Activated naive CD4-positive, alpha-beta T cell treated with anti-CD3 and anti-CD28 coated beads for 36 hours (primary cell): ENCODE measurements at regions of chr2 and their contacts with region 1.

Region 1: DNA sequence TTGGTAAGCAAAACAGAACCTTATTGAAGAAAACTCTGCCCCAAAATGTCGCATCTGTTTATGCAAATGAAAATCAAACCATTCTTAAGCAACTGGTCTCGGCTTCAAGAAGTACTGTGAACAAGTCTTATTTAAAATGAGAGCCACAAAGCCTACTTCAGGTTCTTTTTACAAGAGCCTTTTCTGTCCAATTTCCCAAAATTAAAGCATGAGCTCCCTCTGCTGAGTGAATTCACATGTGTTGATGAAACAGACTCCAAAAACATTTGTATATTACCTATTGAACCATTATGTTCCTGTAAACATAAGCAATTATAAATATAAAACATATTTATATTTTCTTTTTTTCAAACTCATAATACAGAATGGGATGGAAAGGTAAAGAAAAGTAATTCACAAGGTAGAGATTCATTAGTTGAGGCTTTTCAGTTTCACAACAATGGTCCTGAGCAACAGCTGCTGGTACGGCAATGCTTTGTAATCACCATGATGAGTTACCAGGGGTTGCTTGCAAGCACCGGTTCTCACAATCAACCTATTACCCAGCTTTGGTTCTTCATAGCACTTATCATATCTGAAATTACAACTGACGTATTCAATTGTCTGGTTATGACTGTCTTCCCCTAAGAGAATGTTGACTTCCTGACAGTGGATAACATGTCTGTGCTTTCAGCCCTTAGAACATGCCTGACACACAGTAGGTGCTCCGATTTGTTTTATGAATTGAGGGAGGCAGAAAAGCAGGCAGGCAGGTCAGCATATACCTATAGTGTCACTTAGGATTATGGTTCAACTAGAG is 108.4 kb upstream of the BZW1 start:
- DNase-seq: peak; percentile 68
- H3K4me3 Mint-ChIP-seq: peak overlapping the region; percentile 19
- H3K27ac Mint-ChIP-seq: peak overlapping the region; percentile 83
- H3K4me1 Mint-ChIP-seq: peaks cover 55% of the 10 kb centered on the region
- H3K27me3 Mint-ChIP-seq: peaks cover 1% of the 10 kb centered on the region

Region 2: DNA sequence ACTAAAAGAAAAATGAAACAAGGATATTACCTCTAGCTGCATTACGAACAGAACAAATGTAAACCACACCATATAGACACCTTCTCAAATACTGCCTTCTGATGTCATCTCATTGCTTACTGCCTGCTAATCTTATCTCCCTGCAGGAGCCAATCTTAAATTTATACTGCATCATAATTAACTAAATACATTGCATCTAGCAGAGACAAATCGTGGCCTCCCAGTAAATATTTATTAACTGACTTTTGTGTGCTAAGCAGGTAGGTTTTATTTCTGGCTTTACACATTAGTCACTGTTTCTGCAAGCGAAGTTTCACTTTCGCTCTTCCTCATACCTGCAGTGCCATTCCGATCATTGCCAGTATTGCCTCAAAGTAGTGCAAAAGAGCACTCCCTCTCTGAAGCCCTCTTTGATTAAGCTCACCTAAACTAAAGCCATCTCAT is 329.3 kb before region 1 on chr2:
- CTCF ChIA-PET with region 1: no interaction called
- intact Hi-C with region 1: loop called (anchors 1 kb)
- DNase-seq: peak; percentile 66
- H3K4me3 Mint-ChIP-seq: peak overlapping the region; percentile 73
- H3K27ac Mint-ChIP-seq: peak overlapping the region; percentile 70
- H3K4me1 Mint-ChIP-seq: peaks cover 40% of the 10 kb centered on the region
- H3K27me3 Mint-ChIP-seq: no peaks in the 10 kb centered on the region

Region 3: GRCh38 chr2:200483729-200484198 is 219.6 kb before region 1 on chr2:
- CTCF ChIA-PET with region 1: interaction called, 5 read pairs
- intact Hi-C with region 1: loop called (anchors 1 kb)
- DNase-seq: peak; percentile 67
- H3K4me3 Mint-ChIP-seq: no peak overlapping the region
- H3K27ac Mint-ChIP-seq: no peak overlapping the region
- H3K4me1 Mint-ChIP-seq: peaks cover 2% of the 10 kb centered on the region
- H3K27me3 Mint-ChIP-seq: no peaks in the 10 kb centered on the region

Region 4: GRCh38 chr2:200525882-200526651 is 177.3 kb before region 1 on chr2 and contains the start of gene SGO2:
- CTCF ChIA-PET with region 1: no interaction called
- intact Hi-C with region 1: loop called (anchors 1 kb)
- DNase-seq: peak; percentile 98
- H3K4me3 Mint-ChIP-seq: peak within 1 kb of the TSS; percentile 90
- H3K27ac Mint-ChIP-seq: peak within 1 kb of the TSS; percentile 84
- H3K4me1 Mint-ChIP-seq: peaks cover 17% of the 10 kb centered on the region
- H3K27me3 Mint-ChIP-seq: no peaks in the 10 kb centered on the region
- total RNA-seq, gene SGO2: 39.7 to 40.0 TPM

Region 5: DNA sequence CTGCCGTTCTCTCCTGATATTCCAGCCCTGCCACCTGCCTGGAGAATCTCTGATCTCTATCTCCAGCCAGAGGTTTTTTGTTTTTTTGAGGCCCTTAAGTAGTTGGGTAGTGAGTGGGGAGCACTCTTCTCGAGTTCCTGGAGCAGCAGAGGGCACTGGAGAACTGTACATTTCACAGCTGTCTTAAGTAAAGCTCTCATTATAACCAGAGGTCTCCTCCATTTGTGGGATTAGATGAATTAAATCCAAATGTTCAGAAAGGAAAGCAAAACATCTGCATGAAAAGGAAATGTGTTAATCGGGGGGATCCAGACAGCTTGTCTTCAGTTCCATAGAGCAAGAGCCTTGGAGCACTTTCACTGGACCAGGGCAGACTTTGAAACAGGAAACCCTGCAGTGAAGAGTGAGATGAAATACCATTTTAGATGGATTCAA is 84.7 kb before region 1 on chr2:
- CTCF ChIA-PET with region 1: interaction called, 5 read pairs
- intact Hi-C with region 1: loop called (anchors 2 kb)
- DNase-seq: peak; percentile 29
- H3K4me3 Mint-ChIP-seq: no peak overlapping the region
- H3K27ac Mint-ChIP-seq: no peak overlapping the region
- H3K4me1 Mint-ChIP-seq: peaks cover 10% of the 10 kb centered on the region
- H3K27me3 Mint-ChIP-seq: no peaks in the 10 kb centered on the region

Region 6: DNA sequence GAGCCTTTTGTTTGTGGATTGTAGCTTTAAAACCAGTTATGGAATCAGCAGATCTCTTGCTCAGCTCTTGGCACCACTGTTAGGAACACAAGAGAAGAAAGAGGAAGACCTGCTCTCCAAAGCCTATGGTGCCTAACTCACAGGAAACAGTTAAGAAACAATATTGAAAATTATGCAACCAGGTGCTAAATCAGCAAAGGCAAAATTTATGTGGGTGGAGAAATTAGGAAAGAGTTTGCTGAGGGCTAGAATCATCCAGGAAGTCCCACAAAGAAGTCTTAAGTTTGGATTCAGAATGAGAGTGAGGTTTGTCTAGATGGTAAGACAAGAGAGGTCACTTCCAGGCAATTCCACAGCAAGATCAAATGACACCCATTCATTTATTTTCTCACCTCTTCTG is 68.1 kb before region 1 on chr2:
- CTCF ChIA-PET with region 1: no interaction called
- intact Hi-C with region 1: no loop called
- DNase-seq: no peak
- H3K4me3 Mint-ChIP-seq: no peak overlapping the region
- H3K27ac Mint-ChIP-seq: no peak overlapping the region
- H3K4me1 Mint-ChIP-seq: no peaks in the 10 kb centered on the region
- H3K27me3 Mint-ChIP-seq: peaks cover 14% of the 10 kb centered on the region

Region 7: GRCh38 chr2:200795044-200795443 is 91.7 kb after region 1 on chr2:
- CTCF ChIA-PET with region 1: no interaction called
- intact Hi-C with region 1: no loop called
- DNase-seq: no peak
- H3K4me3 Mint-ChIP-seq: no peak overlapping the region
- H3K27ac Mint-ChIP-seq: no peak overlapping the region
- H3K4me1 Mint-ChIP-seq: peaks cover 4% of the 10 kb centered on the region
- H3K27me3 Mint-ChIP-seq: no peaks in the 10 kb centered on the region

Region 8: GRCh38 chr2:200864176-200864976 is 161.1 kb after region 1 on chr2 and contains the start of gene CLK1:
- CTCF ChIA-PET with region 1: interaction called, 4 read pairs
- intact Hi-C with region 1: loop called (anchors 2 kb)
- DNase-seq: peak; percentile 98
- H3K4me3 Mint-ChIP-seq: peak within 1 kb of the TSS; percentile 98
- H3K27ac Mint-ChIP-seq: peak within 1 kb of the TSS; percentile 100
- H3K4me1 Mint-ChIP-seq: peaks cover 32% of the 10 kb centered on the region
- H3K27me3 Mint-ChIP-seq: no peaks in the 10 kb centered on the region
- total RNA-seq, gene CLK1: 174 to 196 TPM